ENCODE measurements at regions of chr20 and their contacts with region 1.

Region 1: GRCh38 chr20:58102744-58103505 is 125.5 kb downstream of the ANKRD60 start:
- DNase-seq: no peak

Region 2: GRCh38 chr20:57957411-57958049 is 145.4 kb before region 1 on chr20:
- intact Hi-C with region 1: no loop called
- DNase-seq: peak; percentile 64

Region 3: DNA sequence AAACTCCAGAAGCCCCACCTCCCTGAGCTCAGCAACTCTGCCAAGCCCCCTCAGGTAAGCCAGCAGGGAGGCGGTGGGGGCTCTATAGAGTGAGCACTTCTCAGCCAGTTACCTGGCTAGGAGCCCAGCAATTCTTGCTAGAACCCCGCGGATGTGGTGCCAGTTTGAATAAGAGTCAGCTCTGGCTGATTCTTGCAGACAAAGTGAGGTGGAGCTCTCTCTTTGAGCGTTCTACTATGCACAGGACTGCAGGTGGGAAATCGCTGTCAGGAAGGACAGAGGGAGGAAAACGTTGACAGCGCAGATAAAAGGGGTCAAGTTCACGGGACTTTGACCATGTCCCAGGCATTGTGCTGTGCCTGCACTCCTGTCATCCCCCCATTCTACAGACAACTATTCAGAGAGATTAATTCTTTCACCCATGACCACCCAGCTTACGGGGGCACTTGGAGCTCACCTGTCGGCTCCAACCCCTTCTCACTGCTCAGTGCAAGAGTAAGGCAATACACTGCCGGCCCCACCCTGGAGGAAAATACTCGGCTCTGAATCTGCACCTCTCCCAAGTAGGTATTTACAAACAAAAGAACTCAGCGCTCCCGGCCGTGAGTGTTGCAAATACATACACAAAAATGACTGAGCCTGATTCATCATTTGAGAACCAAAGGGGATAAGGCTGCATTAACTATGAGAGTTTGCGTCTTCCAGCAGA is 32.7 kb after region 1 on chr20:
- intact Hi-C with region 1: loop called in 1 of 2 experiments (anchors 1 kb)
- DNase-seq: no peak

Measured in posterior vena cava (tissue), 2 donors.